ENCODE measurements at regions of chr4 and their contacts with region 1.

Region 1: DNA sequence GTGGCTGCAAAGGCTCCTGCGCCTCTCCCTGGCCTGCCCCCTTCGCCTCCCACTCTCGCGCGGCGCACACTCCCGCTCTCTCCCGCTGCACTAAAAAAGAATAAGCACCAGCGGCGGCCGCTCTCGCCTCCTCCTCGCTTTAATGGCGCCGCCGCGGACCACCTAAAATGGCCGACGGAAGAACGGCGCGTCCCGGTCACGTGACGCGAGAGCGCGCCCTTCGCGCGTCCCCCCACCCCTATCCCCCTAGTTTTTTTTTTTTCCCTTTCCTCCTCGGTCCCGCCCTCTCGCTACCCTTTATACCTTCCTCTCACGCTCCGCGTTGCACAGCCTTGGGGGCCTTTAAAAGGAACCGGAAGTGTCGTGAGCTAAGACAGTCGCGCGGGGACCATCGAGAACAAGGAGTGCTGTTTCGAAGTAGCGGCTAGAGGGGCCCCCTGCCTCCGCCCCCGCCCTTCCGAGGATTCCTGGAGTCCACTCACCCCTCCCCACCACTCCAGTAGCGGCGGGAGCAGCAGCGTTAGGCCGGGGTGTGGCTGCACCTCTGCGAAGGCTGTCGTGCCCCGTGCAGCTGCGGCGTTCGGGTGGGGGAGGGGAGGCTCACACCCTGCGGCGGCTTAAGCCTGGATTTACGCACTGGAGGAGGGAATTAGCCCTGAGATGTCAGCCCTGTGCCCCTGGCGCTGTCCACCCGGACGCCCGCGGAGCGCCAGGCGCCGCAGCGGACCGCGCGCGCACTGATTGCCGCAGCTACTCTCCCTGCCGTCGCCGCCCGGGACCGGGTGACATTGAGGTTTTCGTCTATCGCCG is at the start of gene HNRNPD:
- DNase-seq: peak; percentile 99
- H3K4me3 ChIP-seq: peak within 1 kb of the TSS; percentile 84 to 96 (median 94)
- H3K27ac ChIP-seq: peak within 1 kb of the TSS; percentile 99 to 100 (median 100)
- H3K4me1 ChIP-seq: peaks cover 25 to 63% (median 58%) of the 10 kb centered on the region in 4 donors
- H3K27me3 ChIP-seq: no peaks in the 10 kb centered on the region
- CTCF ChIP-seq: peak; percentile 10 to 18 (median 17)
- EP300 ChIP-seq: no peak
- POLR2A ChIP-seq: peak; percentile 86
- total RNA-seq, gene HNRNPD: 53.9 to 85.6 (median 69.0) TPM

Region 2: GRCh38 chr4:82284858-82285805 is 88.9 kb before region 1 on chr4:
- intact Hi-C with region 1: loop called (anchors 5 kb)
- DNase-seq: peak; percentile 99
- H3K4me3 ChIP-seq: peak overlapping the region; percentile 49 to 61 (median 52)
- H3K27ac ChIP-seq: peak overlapping the region; percentile 63 to 81 (median 66)
- H3K4me1 ChIP-seq: peaks cover 4 to 12% (median 10%) of the 10 kb centered on the region in 4 donors
- H3K27me3 ChIP-seq: no peaks in the 10 kb centered on the region
- CTCF ChIP-seq: peak in 2 of 3 experiments; percentile 87 to 98
- EP300 ChIP-seq: no peak
- POLR2A ChIP-seq: no peak

Region 3: DNA sequence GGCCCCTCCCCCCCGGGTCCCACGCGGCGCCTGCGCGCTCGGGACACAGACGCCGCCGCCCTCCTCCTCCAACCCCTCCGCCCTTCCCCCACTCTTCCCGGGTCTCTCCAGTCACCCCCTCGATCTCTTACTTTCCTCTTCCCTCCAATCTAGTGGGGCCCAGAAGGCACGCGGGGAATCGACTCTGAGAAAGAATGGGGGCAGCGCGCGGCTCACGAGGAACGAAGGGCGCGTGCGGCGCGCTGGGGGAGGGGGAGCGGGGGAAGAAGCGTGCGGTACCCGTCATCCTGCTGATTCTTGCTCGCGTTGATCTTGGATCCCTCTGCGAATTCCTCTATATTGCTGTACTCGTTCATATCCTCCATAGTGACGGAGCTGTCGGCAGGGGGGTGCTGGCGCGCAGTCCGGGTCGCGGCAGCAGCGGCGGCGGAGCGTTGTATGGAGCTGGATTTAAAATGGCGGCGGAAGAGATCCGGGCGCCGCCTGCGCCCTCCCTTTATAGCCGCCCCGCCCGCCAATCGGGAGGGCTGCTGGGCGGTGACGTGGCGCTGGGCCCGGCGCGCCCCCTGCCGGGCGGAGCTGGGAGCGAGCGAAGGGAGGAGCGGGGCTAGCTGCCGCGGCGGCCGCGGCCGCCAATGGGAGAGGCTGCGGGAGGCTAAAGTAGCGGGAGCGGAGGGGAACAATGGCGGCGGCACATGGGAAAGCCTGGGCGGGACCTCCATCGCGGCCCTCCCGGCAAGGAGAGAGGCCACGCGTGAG is 55.1 kb after region 1 on chr4:
- intact Hi-C with region 1: loop called (anchors 1 kb)
- DNase-seq: peak; percentile 96
- H3K4me3 ChIP-seq: peak overlapping the region; percentile 77 to 98 (median 94)
- H3K27ac ChIP-seq: peak overlapping the region; percentile 98 to 100 (median 98)
- H3K4me1 ChIP-seq: peaks cover 30 to 61% (median 53%) of the 10 kb centered on the region in 4 donors
- H3K27me3 ChIP-seq: no peaks in the 10 kb centered on the region
- CTCF ChIP-seq: peak; percentile 91 to 98 (median 94)
- EP300 ChIP-seq: no peak
- POLR2A ChIP-seq: peak; percentile 79

Region 4: GRCh38 chr4:82900331-82901128 is 526.5 kb after region 1 on chr4 and contains the start of gene THAP9:
- intact Hi-C with region 1: loop called (anchors 5 kb)
- DNase-seq: peak; percentile 99
- H3K4me3 ChIP-seq: peak within 1 kb of the TSS; percentile 71 to 80 (median 75)
- H3K27ac ChIP-seq: peak within 1 kb of the TSS; percentile 90 to 98 (median 97)
- H3K4me1 ChIP-seq: peaks cover 31 to 44% (median 36%) of the 10 kb centered on the region in 4 donors
- H3K27me3 ChIP-seq: no peaks in the 10 kb centered on the region
- CTCF ChIP-seq: no peak
- EP300 ChIP-seq: no peak
- POLR2A ChIP-seq: peak; percentile 87
- total RNA-seq, gene THAP9: 2.1 to 5.2 (median 2.9) TPM

Measured in esophagus muscularis mucosa (tissue), 4 donors.